ENCODE measurements at regions of chrX and their contacts with region 1.

Region 1: GRCh38 chrX:118126286-118126685 is 9.7 kb upstream of the KLHL13 start:
- DNase-seq: no peak

Region 2: GRCh38 chrX:118156953-118157608 is 30.8 kb after region 1 on chrX:
- intact Hi-C with region 1: loop called in 1 of 2 experiments (anchors 1 kb)
- DNase-seq: no peak

Region 3: DNA sequence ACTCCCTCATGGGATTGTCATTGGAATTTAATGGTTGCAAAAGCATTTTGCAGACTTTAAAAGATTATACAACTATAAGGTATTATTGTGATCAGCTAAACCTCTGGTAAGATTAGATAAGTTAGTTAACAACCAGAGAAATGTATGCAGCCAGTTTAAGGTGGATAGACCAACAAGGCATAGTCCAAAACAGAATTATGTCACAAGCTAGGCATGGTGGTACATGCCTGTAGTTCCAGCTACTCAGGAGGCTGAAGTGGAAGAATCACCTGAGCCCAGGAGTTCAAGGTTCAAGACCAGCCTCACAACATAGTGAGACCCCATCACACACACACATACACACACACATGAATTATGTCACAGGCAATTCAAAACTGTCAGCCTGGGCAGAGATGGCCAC is 45.1 kb after region 1 on chrX:
- intact Hi-C with region 1: no loop called
- DNase-seq: no peak

Measured in posterior vena cava (tissue), 2 donors.